Activated T-helper 1 cell treated with anti-CD3 and anti-CD28 coated beads, Interleukin-12 subunit alpha, Interleukin-12 subunit beta, Interleukin-2, Interleukin-4 antibody, amounts not matched to agents 30 ng/mL and 10 ng/mL and 1 ng/mL, durations not matched to agents 14 hours and 24 hours and 36 hours (primary cell): ENCODE measurements at regions of chr4 and their contacts with region 1.

Region 1: GRCh38 chr4:184282251-184282713 is 64.6 kb upstream of the ENPP6 start:
- DNase-seq: peak; percentile 53
- H3K4me3 Mint-ChIP-seq: peak overlapping the region; percentile 50
- H3K27ac Mint-ChIP-seq: peak overlapping the region; percentile 87
- H3K4me1 Mint-ChIP-seq: peaks cover 75% of the 10 kb centered on the region
- H3K27me3 Mint-ChIP-seq: no peaks in the 10 kb centered on the region

Region 2: DNA sequence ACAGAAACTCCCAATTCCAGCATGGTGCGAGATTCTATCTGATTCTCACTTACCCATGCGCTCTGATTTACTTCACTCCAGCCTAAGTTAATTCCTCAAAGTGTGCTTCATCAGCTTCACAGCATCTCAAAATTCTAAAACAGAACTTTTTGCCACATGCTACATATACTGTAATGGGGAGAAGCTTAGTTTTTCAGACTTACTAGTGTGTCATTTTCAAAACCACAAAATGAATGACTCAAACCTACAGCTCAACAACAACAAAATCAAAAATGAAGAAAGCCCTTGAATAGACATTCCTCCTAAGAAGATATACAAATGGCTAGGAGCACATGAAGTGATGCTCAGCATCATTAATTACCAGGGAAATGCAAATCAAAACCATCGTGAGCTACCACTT is 177.1 kb after region 1 on chr4:
- intact Hi-C with region 1: loop called (anchors 1 kb)
- DNase-seq: no peak
- H3K4me3 Mint-ChIP-seq: peak overlapping the region; percentile 35
- H3K27ac Mint-ChIP-seq: peak overlapping the region; percentile 83
- H3K4me1 Mint-ChIP-seq: peaks cover 82% of the 10 kb centered on the region
- H3K27me3 Mint-ChIP-seq: no peaks in the 10 kb centered on the region